Transverse colon (tissue), 4 donors: ENCODE measurements at regions of chr9 and their contacts with region 1.

Region 1: DNA sequence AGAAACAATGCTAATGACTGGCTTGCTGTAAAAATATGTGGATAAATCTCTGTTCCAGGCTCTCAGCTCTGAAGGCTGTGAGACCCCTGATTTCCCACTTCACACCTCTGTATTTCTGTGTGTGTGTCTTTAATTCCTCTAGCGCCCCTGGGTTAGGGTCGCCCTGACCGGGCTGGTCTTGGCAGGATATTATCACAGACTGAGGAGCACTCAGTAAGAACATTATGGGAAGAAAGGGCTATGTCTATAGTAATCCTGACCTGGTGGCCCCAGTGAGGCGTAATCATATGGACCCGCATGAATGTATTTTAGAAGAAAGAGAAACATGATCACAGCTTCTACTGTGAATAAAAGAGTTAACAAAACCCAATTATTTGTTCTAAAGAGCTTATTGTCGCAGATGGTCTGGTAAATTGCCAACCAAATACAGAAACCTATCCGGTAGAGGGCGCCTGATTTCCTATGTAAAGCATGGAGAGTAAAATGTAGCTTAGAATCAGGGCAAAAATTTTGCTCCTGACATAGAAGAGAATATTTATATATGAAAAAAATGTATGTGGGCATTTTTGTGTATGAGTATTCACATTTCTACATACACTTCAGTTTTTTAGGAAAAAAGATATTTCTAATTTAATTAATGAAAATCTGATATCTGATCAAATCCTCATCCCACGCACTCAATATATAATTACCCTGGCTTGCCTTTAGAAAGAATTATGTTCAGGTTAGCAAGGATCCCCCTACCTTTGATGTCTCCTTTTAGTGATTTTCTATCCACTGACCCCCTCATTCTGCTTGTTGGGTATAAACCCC is 5.8 kb upstream of the IFNA1 start:
- DNase-seq: peak; percentile 28
- H3K4me3 ChIP-seq: no peak overlapping the region
- H3K27ac ChIP-seq: no peak overlapping the region
- H3K4me1 ChIP-seq: no peaks in the 10 kb centered on the region
- H3K27me3 ChIP-seq: no peaks in the 10 kb centered on the region
- CTCF ChIP-seq: peak in 4 of 5 experiments; percentile 17 to 43 (median 34)
- EP300 ChIP-seq: no peak
- POLR2A ChIP-seq: no peak

Region 2: GRCh38 chr9:21317956-21318923 is 116.2 kb before region 1 on chr9:
- in situ Hi-C with region 1: loop called in 1 of 4 experiments (anchors 25 kb)
- intact Hi-C with region 1: no loop called
- DNase-seq: peak; percentile 18
- H3K4me3 ChIP-seq: no peak overlapping the region
- H3K27ac ChIP-seq: no peak overlapping the region
- H3K4me1 ChIP-seq: peaks cover 0 to 6% (median 0%) of the 10 kb centered on the region in 4 donors
- H3K27me3 ChIP-seq: peaks cover 11% of the 10 kb centered on the region
- CTCF ChIP-seq: peak; percentile 55 to 71 (median 69)
- EP300 ChIP-seq: no peak
- POLR2A ChIP-seq: no peak

Region 3: DNA sequence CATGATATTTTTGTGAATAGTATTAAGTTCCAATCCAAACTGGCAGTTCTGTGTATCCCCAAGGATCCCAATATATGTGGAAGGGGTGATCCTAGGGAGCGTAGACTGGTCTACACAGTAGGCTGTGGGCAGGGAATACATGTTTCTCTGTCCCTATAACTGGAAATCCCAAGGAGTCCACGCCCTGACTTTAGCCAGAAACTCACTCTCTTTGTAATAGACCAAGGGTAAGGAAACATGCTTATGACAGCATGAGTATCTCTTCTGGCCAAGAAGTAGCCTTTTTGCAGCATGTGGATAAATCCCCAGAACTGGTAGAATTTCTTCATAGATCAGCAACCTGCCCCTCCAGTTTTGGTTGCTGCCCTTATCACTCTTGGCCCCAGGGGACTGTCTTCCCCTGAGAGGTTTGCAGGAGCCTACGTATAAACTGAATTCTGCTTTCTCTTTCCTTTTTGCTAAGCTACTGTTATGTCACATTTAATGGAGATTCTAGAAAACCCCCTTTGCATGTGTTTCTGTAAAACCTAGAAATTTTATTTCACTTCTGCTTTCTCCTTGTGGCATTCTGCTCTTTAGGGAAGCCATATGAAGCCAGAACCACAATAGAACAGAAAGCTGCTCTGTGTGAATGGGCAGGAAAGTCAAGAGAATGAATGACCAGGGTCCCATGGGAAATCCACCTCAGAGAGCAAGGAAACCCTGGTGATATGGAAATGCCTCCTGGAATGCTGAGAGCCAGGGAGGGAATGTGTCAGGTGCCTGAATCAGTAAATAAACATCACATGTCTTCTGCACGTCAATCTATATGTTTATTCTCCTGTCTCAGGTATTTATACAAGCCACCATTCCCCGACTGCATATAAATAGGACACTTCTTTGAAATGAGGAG is 52.7 kb before region 1 on chr9:
- in situ Hi-C with region 1: no loop called
- intact Hi-C with region 1: no loop called
- DNase-seq: no peak
- H3K4me3 ChIP-seq: no peak overlapping the region
- H3K27ac ChIP-seq: no peak overlapping the region
- H3K4me1 ChIP-seq: peaks cover 0 to 6% (median 0%) of the 10 kb centered on the region in 4 donors
- H3K27me3 ChIP-seq: peaks cover 31% of the 10 kb centered on the region
- CTCF ChIP-seq: no peak
- EP300 ChIP-seq: no peak
- POLR2A ChIP-seq: no peak